ENCODE measurements at regions of chr1 and their contacts with region 1.

Region 1: DNA sequence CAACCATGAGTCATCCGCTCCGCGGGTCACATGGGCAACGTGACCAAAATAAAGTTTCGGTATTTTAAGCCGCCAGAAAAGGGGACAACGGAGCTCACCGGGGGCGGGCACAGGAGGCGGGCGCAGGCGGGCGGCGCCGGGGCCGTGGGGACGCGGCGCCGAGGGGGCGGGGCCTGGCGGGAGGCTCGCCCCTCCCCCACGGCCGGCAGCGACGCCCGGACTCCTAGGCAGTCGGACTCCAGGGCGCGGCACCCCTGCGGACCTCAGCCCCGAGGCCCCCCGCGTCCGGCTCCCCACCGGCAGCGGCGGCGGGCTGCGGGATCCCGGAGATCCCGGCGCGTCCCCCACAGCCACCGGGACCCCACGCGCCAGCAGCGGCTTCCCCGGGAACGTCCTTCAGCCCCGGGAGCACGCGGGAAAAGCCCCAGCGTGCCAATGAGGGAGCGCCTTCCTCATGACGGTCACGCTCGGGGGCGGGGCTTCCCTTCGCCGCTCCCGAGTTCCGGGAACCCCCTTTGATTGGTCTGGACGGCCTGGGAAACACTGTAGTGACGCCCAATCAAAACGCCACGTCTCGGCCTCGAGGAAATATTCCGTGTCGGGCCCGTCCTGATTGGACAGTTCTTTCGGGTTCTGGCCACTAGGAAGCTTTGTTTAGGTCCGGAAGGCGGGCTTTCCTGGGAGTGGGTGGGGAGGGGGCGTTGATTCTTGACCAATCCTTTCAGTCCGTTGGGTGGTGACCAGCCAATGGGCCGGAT is 515 bp upstream of the CAMTA1 start:
- DNase-seq: peak; percentile 98 to 99
- H3K4me3 ChIP-seq: peak overlapping the region; percentile 76
- H3K27ac ChIP-seq: peak overlapping the region; percentile 86
- H3K4me1 ChIP-seq: peaks cover 8% of the 10 kb centered on the region
- H3K27me3 ChIP-seq: no peaks in the 10 kb centered on the region
- CTCF ChIP-seq: no peak

Region 2: DNA sequence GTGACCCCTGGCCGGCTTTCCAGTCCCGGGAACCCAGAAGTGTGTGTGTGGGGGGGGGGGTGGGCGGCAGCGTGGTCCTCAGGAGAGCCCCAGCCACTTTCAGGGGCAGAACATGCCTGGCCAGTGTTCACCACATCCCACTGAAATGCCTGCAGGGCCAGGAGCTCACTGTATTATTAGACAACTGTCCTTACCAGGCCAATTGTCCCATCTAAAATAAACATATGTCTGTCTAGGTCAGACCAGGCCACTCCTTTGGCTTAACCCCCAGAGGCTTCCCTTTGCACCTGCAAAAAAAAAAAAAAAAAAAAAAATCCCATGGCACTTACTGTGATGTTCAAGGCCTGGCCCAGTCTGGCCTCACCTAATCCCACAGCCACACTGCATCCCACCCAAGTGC is 999.9 kb before region 1 on chr1:
- CTCF ChIA-PET with region 1: no interaction called
- POLR2A ChIA-PET with region 1: no interaction called
- intact Hi-C with region 1: no loop called
- DNase-seq: no peak
- H3K4me3 ChIP-seq: no peak overlapping the region
- H3K27ac ChIP-seq: no peak overlapping the region
- H3K4me1 ChIP-seq: no peaks in the 10 kb centered on the region
- H3K27me3 ChIP-seq: peaks cover 39% of the 10 kb centered on the region
- CTCF ChIP-seq: no peak

Region 3: DNA sequence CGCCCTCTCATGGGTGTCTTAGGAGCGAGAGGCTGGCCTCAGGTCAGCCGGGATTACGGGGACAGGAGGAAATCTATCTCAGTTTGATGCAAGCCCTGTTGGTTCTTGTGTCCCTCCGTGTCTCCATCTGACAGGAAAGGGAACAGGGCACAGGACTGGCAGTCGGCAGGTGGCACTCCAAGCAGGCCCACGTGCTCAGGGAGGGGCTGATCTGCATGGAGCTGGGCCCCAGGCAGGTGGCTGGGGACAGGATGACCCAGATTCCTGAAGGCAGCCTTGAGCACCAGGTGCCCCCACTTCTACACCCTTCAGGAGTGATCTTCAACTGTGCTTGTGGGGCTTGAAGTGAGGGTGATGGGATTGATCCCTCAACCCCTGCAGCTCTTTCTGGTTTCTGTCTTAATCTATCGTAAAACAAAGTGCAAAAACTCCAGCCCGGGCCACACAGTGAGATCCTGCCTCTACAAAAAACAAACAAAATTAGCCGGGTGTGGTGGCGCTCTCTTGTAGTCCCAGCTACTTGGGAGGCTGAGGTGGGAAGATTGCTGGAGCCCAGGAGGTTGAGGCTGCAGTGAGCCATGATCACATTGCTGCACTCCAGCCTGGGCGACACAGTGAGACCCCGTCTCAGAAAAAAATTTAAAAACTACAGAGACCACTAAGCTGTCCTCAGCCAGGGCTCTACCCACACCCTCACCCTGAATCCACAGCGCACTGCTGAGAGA is 301.5 kb before region 1 on chr1:
- CTCF ChIA-PET with region 1: no interaction called
- POLR2A ChIA-PET with region 1: interaction called, 11 read pairs
- intact Hi-C with region 1: no loop called
- DNase-seq: peak in 1 of 2 experiments; percentile 19
- H3K4me3 ChIP-seq: no peak overlapping the region
- H3K27ac ChIP-seq: no peak overlapping the region
- H3K4me1 ChIP-seq: no peaks in the 10 kb centered on the region
- H3K27me3 ChIP-seq: no peaks in the 10 kb centered on the region
- CTCF ChIP-seq: no peak

Region 4: GRCh38 chr1:6701437-6702153 is 83.1 kb before region 1 on chr1 and contains the start of gene DNAJC11:
- CTCF ChIA-PET with region 1: interaction called, 13 read pairs
- POLR2A ChIA-PET with region 1: no interaction called
- intact Hi-C with region 1: no loop called
- DNase-seq: peak; percentile 64 to 89
- H3K4me3 ChIP-seq: peak within 1 kb of the TSS; percentile 81
- H3K27ac ChIP-seq: no peak within 1 kb of the TSS
- H3K4me1 ChIP-seq: 0 out of 2 replicates have a peak, but pooled peaks cover 6% of the 10 kb centered on the region
- H3K27me3 ChIP-seq: no peaks in the 10 kb centered on the region; the same call in 1 of the 2 replicates
- CTCF ChIP-seq: peak; percentile 48; the same call in 1 of the 2 replicates
- total RNA-seq, gene DNAJC11: 49.2 and 52.8 TPM in 2 replicates

Region 5: GRCh38 chr1:6727535-6727934 is 57.2 kb before region 1 on chr1:
- CTCF ChIA-PET with region 1: no interaction called
- POLR2A ChIA-PET with region 1: no interaction called
- intact Hi-C with region 1: loop called (anchors 5 kb)
- DNase-seq: peak; percentile 39 to 44
- H3K4me3 ChIP-seq: no peak overlapping the region
- H3K27ac ChIP-seq: no peak overlapping the region
- H3K4me1 ChIP-seq: no peaks in the 10 kb centered on the region
- H3K27me3 ChIP-seq: peaks cover 9% of the 10 kb centered on the region
- CTCF ChIP-seq: peak; percentile 92